CD4-positive, alpha-beta memory T cell (primary cell): ENCODE measurements at regions of chr17 and their contacts with region 1.

Region 1: GRCh38 chr17:68457539-68458259 is 403 bp upstream of the WIPI1 start:
- DNase-seq: peak; percentile 97 to 99 (median 99)
- H3K4me3 ChIP-seq: peak overlapping the region; percentile 34 to 57
- H3K4me3 Mint-ChIP-seq: peak overlapping the region; percentile 76 to 92 (median 86)
- H3K27ac ChIP-seq: peak overlapping the region; percentile 64
- H3K27ac Mint-ChIP-seq: peak overlapping the region; percentile 85 to 97 (median 95)
- H3K4me1 ChIP-seq: peaks cover 60% of the 10 kb centered on the region
- H3K4me1 Mint-ChIP-seq: peaks cover 36 to 66% (median 49%) of the 10 kb centered on the region in 4 donors
- H3K27me3 ChIP-seq: no peaks in the 10 kb centered on the region
- H3K27me3 Mint-ChIP-seq: no peaks in the 10 kb centered on the region

Region 2: DNA sequence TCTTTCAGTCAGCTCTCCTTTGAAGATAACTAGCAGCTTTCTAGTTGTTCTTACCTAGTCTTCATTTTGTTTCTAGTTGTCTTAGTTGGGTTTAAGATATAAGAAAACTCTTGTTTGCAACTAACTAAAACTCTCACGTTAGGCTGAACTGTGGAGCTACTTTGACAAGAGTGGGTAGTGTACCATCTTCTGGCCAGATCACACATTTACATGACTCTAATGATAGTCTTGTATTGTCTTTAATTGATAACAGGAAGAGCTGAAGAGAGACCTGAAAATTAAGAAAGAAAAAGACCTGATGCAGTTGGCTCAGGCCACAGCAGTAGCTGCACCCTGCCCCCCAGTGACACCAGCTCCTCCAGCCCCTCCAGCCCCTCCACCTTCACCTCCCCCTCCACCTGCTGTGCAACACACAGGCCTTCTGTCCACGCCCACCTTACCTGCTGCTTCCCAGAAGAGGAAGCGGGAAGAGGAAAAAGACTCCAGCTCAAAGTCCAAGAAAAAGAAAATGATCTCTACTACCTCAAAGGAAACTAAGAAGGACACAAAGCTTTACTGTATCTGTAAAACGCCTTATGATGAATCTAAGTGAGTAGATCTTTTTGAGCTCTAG is 498.3 kb before region 1 on chr17:
- CTCF ChIA-PET with region 1: interaction called, 3 read pairs
- POLR2A ChIA-PET with region 1: no interaction called
- intact Hi-C with region 1: loop called (anchors 2 kb)
- DNase-seq: no peak
- H3K4me3 ChIP-seq: no peak overlapping the region
- H3K4me3 Mint-ChIP-seq: no peak overlapping the region
- H3K27ac ChIP-seq: no peak overlapping the region
- H3K27ac Mint-ChIP-seq: peak overlapping the region in 6 of 7 donors; percentile 1 to 90 (median 72)
- H3K4me1 ChIP-seq: no peaks in the 10 kb centered on the region
- H3K4me1 Mint-ChIP-seq: peaks cover 0 to 6% (median 3%) of the 10 kb centered on the region in 4 donors
- H3K27me3 ChIP-seq: no peaks in the 10 kb centered on the region
- H3K27me3 Mint-ChIP-seq: no peaks in the 10 kb centered on the region

Region 3: DNA sequence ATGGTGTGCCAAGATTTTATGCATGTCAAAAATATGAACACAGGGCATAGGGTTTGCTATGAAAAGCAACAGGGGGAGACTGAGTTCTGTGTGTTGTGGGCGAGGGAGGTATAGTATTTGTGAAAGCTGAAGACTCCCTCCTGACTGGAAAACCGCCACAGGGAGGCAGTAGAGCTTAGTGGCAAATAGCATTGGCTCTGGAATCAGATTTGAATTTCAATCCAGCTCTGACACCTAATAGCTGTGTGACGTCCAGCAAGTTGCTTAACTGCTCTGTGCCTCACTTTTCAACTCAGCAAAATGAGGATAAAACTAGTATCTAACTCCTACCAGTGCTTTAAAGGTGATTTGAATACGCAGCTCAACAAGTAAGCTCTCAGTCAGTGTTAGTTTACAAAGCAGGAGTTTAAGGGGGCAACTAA is 400.2 kb before region 1 on chr17:
- CTCF ChIA-PET with region 1: interaction called, 3 read pairs
- POLR2A ChIA-PET with region 1: interaction called, 3 read pairs
- intact Hi-C with region 1: loop called (anchors 2 kb)
- DNase-seq: peak; percentile 43 to 63 (median 51)
- H3K4me3 ChIP-seq: no peak overlapping the region
- H3K4me3 Mint-ChIP-seq: no peak overlapping the region
- H3K27ac ChIP-seq: no peak overlapping the region
- H3K27ac Mint-ChIP-seq: no peak overlapping the region
- H3K4me1 ChIP-seq: peaks cover 5% of the 10 kb centered on the region
- H3K4me1 Mint-ChIP-seq: peaks cover 0 to 19% (median 4%) of the 10 kb centered on the region in 4 donors
- H3K27me3 ChIP-seq: no peaks in the 10 kb centered on the region
- H3K27me3 Mint-ChIP-seq: no peaks in the 10 kb centered on the region

Region 4: GRCh38 chr17:68184816-68185436 is 272.8 kb before region 1 on chr17:
- CTCF ChIA-PET with region 1: interaction called, 4 read pairs
- POLR2A ChIA-PET with region 1: interaction called, 19 read pairs
- intact Hi-C with region 1: no loop called
- DNase-seq: peak; percentile 69 to 84 (median 75)
- H3K4me3 ChIP-seq: peak overlapping the region; percentile 1 to 54
- H3K4me3 Mint-ChIP-seq: peak overlapping the region; percentile 78 to 100 (median 94)
- H3K27ac ChIP-seq: peak overlapping the region; percentile 80
- H3K27ac Mint-ChIP-seq: peak overlapping the region; percentile 90 to 96 (median 95)
- H3K4me1 ChIP-seq: peaks cover 73% of the 10 kb centered on the region
- H3K4me1 Mint-ChIP-seq: peaks cover 46 to 89% (median 65%) of the 10 kb centered on the region in 4 donors
- H3K27me3 ChIP-seq: no peaks in the 10 kb centered on the region
- H3K27me3 Mint-ChIP-seq: no peaks in the 10 kb centered on the region

Region 5: DNA sequence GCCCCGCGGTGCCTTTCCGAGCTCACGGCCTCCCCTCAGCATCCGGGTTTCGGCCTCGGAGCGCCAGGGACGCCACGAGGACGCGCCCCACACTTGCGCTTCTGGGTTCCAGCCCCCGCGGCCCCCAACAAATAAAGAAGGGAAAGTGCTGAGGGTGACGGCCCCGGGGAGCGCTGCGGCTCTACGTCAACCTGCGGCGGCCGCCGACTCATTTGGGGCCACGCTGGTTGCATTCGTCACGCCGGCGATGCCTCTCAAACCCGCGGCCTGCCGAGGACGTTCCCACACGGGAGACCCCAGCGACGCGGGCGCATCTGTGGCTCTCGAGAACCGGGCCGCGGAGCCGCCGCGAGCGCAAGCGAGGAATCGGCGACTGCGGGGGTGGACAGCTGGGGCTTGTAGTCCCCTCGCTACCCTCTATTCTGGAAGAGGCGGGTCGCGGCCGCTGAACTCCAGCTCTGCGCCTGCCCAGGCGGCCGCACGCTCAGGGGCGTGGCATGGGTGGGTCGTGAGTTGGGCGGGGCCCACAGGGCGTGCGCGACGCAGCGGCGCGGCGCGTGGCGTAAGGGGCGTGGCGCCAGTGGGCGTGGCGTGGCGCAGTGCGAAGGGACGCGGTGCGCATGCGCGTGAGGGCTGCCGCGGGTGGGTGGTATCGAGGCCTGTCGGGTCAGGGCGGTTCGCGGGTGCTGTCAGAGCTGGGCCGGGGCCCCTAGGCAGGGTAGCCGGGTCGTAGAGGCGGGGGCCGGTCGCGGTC is 210.1 kb before region 1 on chr17 and contains the start of gene AMZ2:
- CTCF ChIA-PET with region 1: interaction called, 4 read pairs
- POLR2A ChIA-PET with region 1: interaction called, 30 read pairs
- intact Hi-C with region 1: loop called (anchors 1 kb)
- DNase-seq: peak; percentile 94 to 99 (median 97)
- H3K4me3 ChIP-seq: peak within 1 kb of the TSS; percentile 76 to 95
- H3K4me3 Mint-ChIP-seq: peak within 1 kb of the TSS; percentile 85 to 94 (median 94)
- H3K27ac ChIP-seq: peak within 1 kb of the TSS; percentile 99
- H3K27ac Mint-ChIP-seq: peak within 1 kb of the TSS; percentile 97 to 99 (median 99)
- H3K4me1 ChIP-seq: peaks cover 37% of the 10 kb centered on the region
- H3K4me1 Mint-ChIP-seq: peaks cover 33 to 59% (median 37%) of the 10 kb centered on the region in 4 donors
- H3K27me3 ChIP-seq: no peaks in the 10 kb centered on the region
- H3K27me3 Mint-ChIP-seq: no peaks in the 10 kb centered on the region
- total RNA-seq, gene AMZ2: 66.1 to 81.2 TPM

Region 6: GRCh38 chr17:68368387-68368786 is 89.3 kb before region 1 on chr17:
- CTCF ChIA-PET with region 1: no interaction called
- POLR2A ChIA-PET with region 1: no interaction called
- intact Hi-C with region 1: no loop called
- DNase-seq: no peak
- H3K4me3 ChIP-seq: no peak overlapping the region
- H3K4me3 Mint-ChIP-seq: no peak overlapping the region
- H3K27ac ChIP-seq: no peak overlapping the region
- H3K27ac Mint-ChIP-seq: no peak overlapping the region
- H3K4me1 ChIP-seq: no peaks in the 10 kb centered on the region
- H3K4me1 Mint-ChIP-seq: peaks cover 0 to 1% (median 0%) of the 10 kb centered on the region in 4 donors
- H3K27me3 ChIP-seq: no peaks in the 10 kb centered on the region
- H3K27me3 Mint-ChIP-seq: no peaks in the 10 kb centered on the region

Region 7: DNA sequence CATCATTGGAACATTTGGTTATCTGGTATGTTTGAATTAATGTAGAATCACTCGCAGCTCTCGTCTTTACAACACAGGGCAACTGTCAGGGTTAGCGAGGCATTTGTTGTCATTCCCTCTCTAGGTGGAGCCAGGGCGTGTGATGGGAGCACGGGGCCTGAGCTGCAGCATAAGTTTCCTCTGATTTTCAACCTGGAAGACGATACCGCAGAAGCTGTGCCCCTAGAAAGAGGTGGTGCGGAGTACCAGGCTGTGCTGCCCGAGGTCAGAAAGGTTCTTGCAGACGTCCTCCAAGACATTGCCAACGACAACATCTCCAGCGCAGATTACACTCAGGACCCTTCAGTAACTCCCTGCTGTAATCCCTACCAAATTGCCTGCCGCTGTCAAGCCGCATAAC is 37.6 kb before region 1 on chr17:
- CTCF ChIA-PET with region 1: no interaction called
- POLR2A ChIA-PET with region 1: no interaction called
- intact Hi-C with region 1: loop called (anchors 10 kb)
- DNase-seq: no peak
- H3K4me3 ChIP-seq: no peak overlapping the region
- H3K4me3 Mint-ChIP-seq: no peak overlapping the region
- H3K27ac ChIP-seq: no peak overlapping the region
- H3K27ac Mint-ChIP-seq: no peak overlapping the region
- H3K4me1 ChIP-seq: peaks cover 4% of the 10 kb centered on the region
- H3K4me1 Mint-ChIP-seq: peaks cover 5 to 23% (median 15%) of the 10 kb centered on the region in 4 donors
- H3K27me3 ChIP-seq: no peaks in the 10 kb centered on the region
- H3K27me3 Mint-ChIP-seq: no peaks in the 10 kb centered on the region

Region 8: DNA sequence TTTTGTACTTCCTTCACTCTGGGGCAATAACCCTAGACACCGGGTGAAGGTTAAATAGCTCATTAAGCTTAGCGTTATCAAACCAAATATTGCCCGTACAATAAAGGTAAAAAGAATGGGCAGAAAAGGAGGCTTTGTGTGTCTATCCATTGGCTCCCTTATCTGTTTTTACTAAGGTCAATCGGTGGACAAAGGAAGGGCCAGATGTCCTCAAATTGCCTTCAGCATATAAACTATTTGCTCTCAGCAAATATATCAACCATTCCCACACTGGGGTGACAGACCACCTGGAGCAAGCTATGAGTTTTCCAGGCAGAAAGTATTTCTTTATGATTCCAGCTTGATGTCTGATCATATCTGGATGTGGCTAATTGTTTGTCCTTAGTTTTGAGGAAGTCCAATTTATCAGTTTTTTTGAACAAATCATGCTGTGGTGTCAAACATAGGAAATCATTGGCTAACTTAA is 24.9 kb after region 1 on chr17:
- CTCF ChIA-PET with region 1: no interaction called
- POLR2A ChIA-PET with region 1: no interaction called
- intact Hi-C with region 1: no loop called
- DNase-seq: no peak
- H3K4me3 ChIP-seq: no peak overlapping the region
- H3K4me3 Mint-ChIP-seq: no peak overlapping the region
- H3K27ac ChIP-seq: no peak overlapping the region
- H3K27ac Mint-ChIP-seq: no peak overlapping the region
- H3K4me1 ChIP-seq: peaks cover 6% of the 10 kb centered on the region
- H3K4me1 Mint-ChIP-seq: peaks cover 4 to 6% (median 5%) of the 10 kb centered on the region in 4 donors
- H3K27me3 ChIP-seq: no peaks in the 10 kb centered on the region
- H3K27me3 Mint-ChIP-seq: peaks cover 5 to 10% of the 10 kb centered on the region in 2 donors

Region 9: DNA sequence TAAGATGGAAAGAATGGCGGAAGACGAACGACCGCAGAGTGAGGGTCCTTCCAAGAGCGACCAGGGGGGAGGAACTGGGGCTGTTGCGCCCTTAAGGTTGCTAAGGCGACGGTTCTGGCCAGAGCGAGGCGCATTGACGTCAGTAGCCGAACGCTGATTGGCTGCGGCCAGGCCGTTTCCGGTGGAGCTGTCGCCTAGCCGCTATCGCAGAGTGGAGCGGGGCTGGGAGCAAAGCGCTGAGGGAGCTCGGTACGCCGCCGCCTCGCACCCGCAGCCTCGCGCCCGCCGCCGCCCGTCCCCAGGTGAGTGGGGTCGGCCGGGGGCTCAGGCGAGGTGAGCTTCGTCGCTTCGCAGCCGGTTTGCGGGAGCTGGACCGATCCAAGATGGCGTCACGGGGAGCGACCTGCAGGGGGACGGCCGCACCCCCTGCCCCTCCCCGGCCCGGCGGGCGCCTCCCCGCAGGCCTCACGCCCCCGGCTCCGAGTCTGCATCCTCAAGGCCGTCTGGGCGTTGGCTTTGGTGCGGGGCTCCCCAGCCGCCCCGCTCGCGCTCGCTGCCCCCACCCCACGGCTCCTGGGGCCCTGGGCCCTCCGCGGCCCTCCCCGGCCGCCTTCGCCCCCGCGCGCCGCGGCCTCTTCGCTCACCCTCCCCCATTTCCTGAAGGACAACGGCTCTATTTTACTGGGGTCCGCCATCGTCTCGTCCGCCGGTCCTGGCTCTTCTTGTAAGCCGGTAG is 54.7 kb after region 1 on chr17 and contains the start of gene PRKAR1A:
- CTCF ChIA-PET with region 1: no interaction called
- POLR2A ChIA-PET with region 1: interaction called, 4 read pairs
- intact Hi-C with region 1: loop called (anchors 2 kb)
- DNase-seq: peak; percentile 93 to 97 (median 96)
- H3K4me3 ChIP-seq: peak within 1 kb of the TSS; percentile 95 to 96
- H3K4me3 Mint-ChIP-seq: peak within 1 kb of the TSS; percentile 97 to 100 (median 99)
- H3K27ac ChIP-seq: peak within 1 kb of the TSS; percentile 96
- H3K27ac Mint-ChIP-seq: peak within 1 kb of the TSS; percentile 96 to 100 (median 100)
- H3K4me1 ChIP-seq: peaks cover 30% of the 10 kb centered on the region
- H3K4me1 Mint-ChIP-seq: peaks cover 36 to 70% (median 43%) of the 10 kb centered on the region in 4 donors
- H3K27me3 ChIP-seq: no peaks in the 10 kb centered on the region
- H3K27me3 Mint-ChIP-seq: no peaks in the 10 kb centered on the region
- total RNA-seq, gene PRKAR1A: 182 to 183 TPM